ENCODE measurements at regions of chr1 and their contacts with region 1.

Region 1: GRCh38 chr1:224113918-224114786 is at the start of gene FBXO28:
- DNase-seq: peak; percentile 84
- ATAC-seq: peak; percentile 95
- H3K4me3 Mint-ChIP-seq: peak within 1 kb of the TSS; percentile 92
- H3K27ac Mint-ChIP-seq: peak within 1 kb of the TSS; percentile 94
- H3K4me1 Mint-ChIP-seq: peaks cover 28% of the 10 kb centered on the region
- H3K27me3 Mint-ChIP-seq: peaks cover 4% of the 10 kb centered on the region
- CTCF ChIP-seq: no peak
- total RNA-seq, gene FBXO28: 27.5 and 30.4 TPM in 2 replicates

Region 2: DNA sequence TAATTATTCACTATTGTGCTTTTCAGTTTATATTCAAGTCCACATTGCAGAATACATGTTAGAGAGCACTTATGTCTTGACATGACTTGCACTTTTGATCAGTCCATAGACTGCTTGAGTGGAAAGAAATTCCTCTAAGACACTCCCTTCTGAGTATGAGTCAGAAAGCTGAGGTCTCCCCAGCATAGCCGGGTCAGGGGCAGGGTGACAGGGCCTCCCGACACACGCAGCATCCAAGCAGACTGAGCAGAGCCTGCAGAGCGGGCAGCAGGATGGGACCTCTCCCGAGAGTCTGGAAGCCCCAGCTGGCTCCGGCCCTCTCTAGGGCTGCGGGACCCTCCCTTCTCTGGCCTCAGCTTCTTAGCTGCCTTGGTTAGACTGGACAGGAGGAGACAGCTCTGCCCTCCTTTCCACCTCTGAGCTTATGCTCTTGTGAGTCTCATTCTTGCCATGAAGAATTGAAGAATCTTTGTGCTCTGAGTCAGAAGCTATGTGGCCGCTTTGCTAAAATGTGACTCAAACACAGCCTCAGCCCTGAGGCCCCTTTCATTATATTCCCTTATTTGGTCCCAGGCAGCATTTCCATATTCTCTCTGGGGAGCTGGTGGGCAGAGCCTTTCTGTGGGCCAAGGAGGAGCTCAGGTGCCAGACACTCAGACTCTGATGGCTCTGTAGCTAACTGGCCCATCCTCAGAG is 413.1 kb before region 1 on chr1:
- CTCF ChIA-PET with region 1: no interaction called
- POLR2A ChIA-PET with region 1: no interaction called
- intact Hi-C with region 1: loop called (anchors 1 kb)
- DNase-seq: no peak
- ATAC-seq: no peak
- H3K4me3 Mint-ChIP-seq: no peak overlapping the region
- H3K27ac Mint-ChIP-seq: no peak overlapping the region
- H3K4me1 Mint-ChIP-seq: peaks cover 9% of the 10 kb centered on the region
- H3K27me3 Mint-ChIP-seq: peaks cover 13% of the 10 kb centered on the region
- CTCF ChIP-seq: no peak

Region 3: DNA sequence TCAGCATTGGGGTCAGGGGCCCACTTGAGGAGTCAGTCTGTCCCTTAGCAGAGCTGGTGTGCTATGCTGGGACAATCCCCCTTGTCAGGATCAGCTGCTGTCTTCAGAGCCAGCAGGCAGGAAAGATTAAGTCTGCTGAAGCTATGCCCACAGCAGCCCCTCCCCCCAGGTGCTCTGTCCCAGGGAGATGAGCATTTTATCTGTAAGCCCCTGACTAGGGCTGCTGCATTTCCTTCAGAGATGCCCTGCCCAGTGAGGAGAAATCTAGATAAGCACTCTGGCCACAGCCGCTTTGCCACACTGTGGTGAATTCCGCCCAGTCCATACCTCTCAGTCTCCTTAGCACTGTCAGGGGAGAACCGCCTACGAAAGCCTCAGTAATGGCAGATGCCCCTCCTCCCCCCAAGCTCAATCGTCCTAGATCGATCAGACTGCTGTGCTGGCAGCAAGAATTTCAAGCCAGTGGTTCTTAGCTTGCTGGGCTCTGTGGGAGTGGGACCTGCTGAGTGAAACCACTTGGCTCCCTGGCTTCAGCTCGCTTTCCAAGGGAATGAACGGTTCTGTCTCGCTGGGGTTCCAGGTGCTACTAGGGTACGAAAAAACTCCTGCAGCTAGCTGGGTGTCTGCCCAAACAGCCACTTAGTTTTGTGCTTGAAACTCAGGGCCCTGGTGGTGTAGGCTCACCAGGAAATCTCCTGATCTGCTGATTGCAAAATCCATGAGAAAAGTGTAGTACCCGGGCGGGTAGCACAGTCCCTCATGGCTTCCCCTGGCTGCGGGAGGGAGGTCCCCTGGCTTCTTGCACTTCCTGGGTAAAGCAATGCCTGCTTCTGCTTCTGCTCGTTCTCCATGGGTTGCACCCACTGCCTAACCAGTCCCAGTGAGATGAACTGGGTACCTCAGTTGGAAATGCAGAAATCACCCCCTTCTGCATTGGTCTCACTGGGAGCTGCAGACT is 243.3 kb before region 1 on chr1:
- CTCF ChIA-PET with region 1: no interaction called
- POLR2A ChIA-PET with region 1: no interaction called
- intact Hi-C with region 1: no loop called
- DNase-seq: no peak
- ATAC-seq: no peak
- H3K4me3 Mint-ChIP-seq: peak overlapping the region; percentile 29
- H3K27ac Mint-ChIP-seq: no peak overlapping the region
- H3K4me1 Mint-ChIP-seq: no peaks in the 10 kb centered on the region
- H3K27me3 Mint-ChIP-seq: peaks cover 38% of the 10 kb centered on the region
- CTCF ChIP-seq: no peak

Region 4: GRCh38 chr1:224168859-224169380 is 54.8 kb after region 1 on chr1:
- CTCF ChIA-PET with region 1: interaction called, 3 read pairs
- POLR2A ChIA-PET with region 1: interaction called, 4 read pairs
- intact Hi-C with region 1: loop called (anchors 5 kb)
- DNase-seq: no peak
- ATAC-seq: peak; percentile 89
- H3K4me3 Mint-ChIP-seq: peak overlapping the region; percentile 5
- H3K27ac Mint-ChIP-seq: peak overlapping the region; percentile 8
- H3K4me1 Mint-ChIP-seq: peaks cover 35% of the 10 kb centered on the region
- H3K27me3 Mint-ChIP-seq: no peaks in the 10 kb centered on the region
- CTCF ChIP-seq: no peak

Region 5: DNA sequence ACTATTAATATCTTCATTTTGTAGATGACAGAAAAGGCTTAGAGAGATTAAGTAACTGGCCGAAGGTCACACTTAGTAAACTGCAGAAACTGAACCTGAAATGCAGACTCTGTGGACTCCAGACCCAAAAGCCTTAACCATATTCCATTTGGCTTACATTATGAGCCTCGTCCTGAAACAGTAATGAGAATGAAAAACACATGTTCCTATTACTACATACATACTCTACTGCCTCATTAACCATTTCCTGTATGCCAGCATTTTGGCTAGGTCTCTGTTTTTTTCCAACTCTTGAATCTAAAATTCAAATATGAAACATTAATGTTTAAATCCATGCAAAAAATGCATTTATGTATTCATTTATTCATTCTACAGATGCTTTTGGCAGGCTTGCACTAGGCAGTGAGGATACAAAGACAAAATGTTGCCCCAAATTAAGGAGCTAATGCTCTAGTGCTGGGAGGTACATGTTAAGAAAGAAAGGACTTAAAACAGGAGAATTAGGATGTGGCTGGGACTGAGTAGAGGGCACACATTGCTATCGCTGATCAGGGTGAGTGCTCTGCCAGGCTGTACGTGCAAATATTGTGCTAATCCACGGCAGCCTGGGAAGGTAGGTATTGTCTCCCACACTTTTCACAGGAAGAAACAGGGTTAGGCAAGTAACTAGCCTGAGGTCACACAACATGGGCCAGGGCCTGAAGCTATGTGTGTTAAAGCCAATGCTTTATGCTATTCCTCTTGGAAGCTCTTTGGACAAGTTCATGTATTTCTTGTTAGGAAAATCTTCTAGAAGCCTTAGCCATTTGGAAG is 82.9 kb after region 1 on chr1:
- CTCF ChIA-PET with region 1: no interaction called
- POLR2A ChIA-PET with region 1: no interaction called
- intact Hi-C with region 1: no loop called
- DNase-seq: no peak
- ATAC-seq: no peak
- H3K4me3 Mint-ChIP-seq: no peak overlapping the region
- H3K27ac Mint-ChIP-seq: no peak overlapping the region
- H3K4me1 Mint-ChIP-seq: peaks cover 20% of the 10 kb centered on the region
- H3K27me3 Mint-ChIP-seq: no peaks in the 10 kb centered on the region
- CTCF ChIP-seq: no peak

Region 6: GRCh38 chr1:224356685-224357625 is 242.8 kb after region 1 on chr1 and contains the start of gene CNIH4:
- CTCF ChIA-PET with region 1: interaction called, 4 read pairs
- POLR2A ChIA-PET with region 1: no interaction called
- intact Hi-C with region 1: loop called (anchors 1 kb)
- DNase-seq: peak; percentile 76
- ATAC-seq: peak; percentile 99
- H3K4me3 Mint-ChIP-seq: peak within 1 kb of the TSS; percentile 91
- H3K27ac Mint-ChIP-seq: peak within 1 kb of the TSS; percentile 81
- H3K4me1 Mint-ChIP-seq: peaks cover 24% of the 10 kb centered on the region
- H3K27me3 Mint-ChIP-seq: no peaks in the 10 kb centered on the region
- CTCF ChIP-seq: no peak
- total RNA-seq, gene CNIH4: 16.2 and 21.0 TPM in 2 replicates

Region 7: GRCh38 chr1:224434691-224435317 is 320.7 kb after region 1 on chr1 and contains the start of gene WDR26:
- CTCF ChIA-PET with region 1: interaction called, 3 read pairs
- POLR2A ChIA-PET with region 1: no interaction called
- intact Hi-C with region 1: loop called (anchors 2 kb)
- DNase-seq: peak; percentile 74
- ATAC-seq: peak; percentile 85
- H3K4me3 Mint-ChIP-seq: peak within 1 kb of the TSS; percentile 96
- H3K27ac Mint-ChIP-seq: peak within 1 kb of the TSS; percentile 97
- H3K4me1 Mint-ChIP-seq: peaks cover 47% of the 10 kb centered on the region
- H3K27me3 Mint-ChIP-seq: no peaks in the 10 kb centered on the region
- CTCF ChIP-seq: no peak
- total RNA-seq, gene WDR26: 75.3 and 91.3 TPM in 2 replicates

Measured in activated B cell treated with CpG ODN at 0.5 μM for 24 hours (primary cell).